Mucosa of descending colon (tissue), 3 donors: ENCODE measurements at regions of chr2 and their contacts with region 1.

Region 1: GRCh38 chr2:44291281-44292248 is 16.3 kb downstream of the SLC3A1 start:
- DNase-seq: peak; percentile 63 to 78 (median 69)
- ATAC-seq: peak; percentile 96
- H3K4me3 ChIP-seq: no peak overlapping the region
- H3K4me1 ChIP-seq: peaks cover 13% of the 10 kb centered on the region
- CTCF ChIP-seq: peak; percentile 46

Region 2: DNA sequence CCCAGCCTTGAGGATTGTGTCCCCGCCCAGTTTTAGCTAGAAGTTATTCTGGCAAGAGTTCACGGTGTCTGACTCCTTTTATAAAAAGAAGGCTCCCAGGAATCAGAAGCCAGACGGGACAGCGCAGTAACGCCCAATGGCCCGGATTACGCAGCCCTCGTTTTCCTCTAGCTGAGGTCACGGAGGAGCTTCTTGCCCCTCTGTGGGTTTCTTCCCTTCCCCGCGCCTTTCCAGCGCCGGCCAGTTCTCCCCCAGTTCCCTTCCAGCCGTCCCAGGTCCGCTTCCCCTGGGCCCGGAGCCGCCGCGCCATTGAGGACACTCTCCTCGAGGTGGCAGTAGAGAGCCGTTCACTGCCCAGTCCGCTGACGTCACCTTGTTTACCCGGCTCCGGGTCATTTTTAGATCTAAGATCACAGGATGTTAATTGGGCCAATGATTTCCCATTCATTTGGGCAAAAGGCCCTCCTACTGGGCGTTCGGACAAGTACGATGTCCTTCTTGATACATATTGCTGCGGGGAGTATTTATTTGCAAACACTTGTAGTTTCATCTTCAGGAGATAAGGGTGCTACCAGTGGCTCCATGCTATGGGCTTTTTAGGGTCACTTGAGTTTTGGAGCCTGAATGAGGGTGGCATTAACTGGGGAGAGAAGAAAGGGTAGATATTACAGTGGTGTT is 204.4 kb before region 1 on chr2:
- intact Hi-C with region 1: loop called in 1 of 2 experiments (anchors 5 kb)
- DNase-seq: peak; percentile 88 to 94 (median 93)
- ATAC-seq: peak; percentile 98
- H3K4me3 ChIP-seq: no peak overlapping the region
- H3K4me1 ChIP-seq: no peaks in the 10 kb centered on the region
- CTCF ChIP-seq: peak; percentile 93

Region 3: GRCh38 chr2:44244129-44244871 is 47.3 kb before region 1 on chr2:
- intact Hi-C with region 1: loop called in 1 of 2 experiments (anchors 2 kb)
- DNase-seq: peak in 2 of 3 donors; percentile 45 to 63
- ATAC-seq: peak; percentile 78
- H3K4me3 ChIP-seq: no peak overlapping the region
- H3K4me1 ChIP-seq: peaks cover 9% of the 10 kb centered on the region
- CTCF ChIP-seq: peak; percentile 43

Region 4: DNA sequence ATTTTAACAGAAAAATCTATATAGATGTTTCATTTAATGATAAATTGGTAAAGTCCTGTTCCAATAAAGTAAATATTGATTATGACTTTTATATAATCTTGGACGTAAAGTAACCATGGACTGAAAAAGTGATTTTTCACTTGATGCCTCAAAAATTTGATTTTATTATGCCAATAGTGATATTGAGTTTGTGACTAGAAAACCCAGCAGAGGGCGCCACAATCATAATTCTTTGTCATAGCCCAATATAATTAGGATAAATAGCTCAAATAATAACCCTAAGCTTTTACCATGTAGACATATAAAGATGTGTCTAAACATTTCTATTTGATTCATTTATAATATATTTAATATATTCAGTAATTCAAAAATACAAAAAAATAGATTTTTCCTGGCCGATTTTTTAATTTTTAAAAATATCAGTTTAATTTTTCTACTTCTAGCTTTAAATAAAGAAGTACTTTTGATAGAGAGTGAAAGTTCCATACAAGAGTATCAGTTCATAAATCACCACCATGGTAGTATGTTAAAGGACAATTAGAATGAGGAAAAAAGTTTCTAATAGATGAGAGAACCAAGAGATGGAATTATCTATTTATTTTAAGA is 100.9 kb after region 1 on chr2:
- intact Hi-C with region 1: no loop called
- DNase-seq: peak in 1 of 3 donors; percentile 77
- ATAC-seq: no peak
- H3K4me3 ChIP-seq: no peak overlapping the region
- H3K4me1 ChIP-seq: no peaks in the 10 kb centered on the region
- CTCF ChIP-seq: peak; percentile 23